ENCODE measurements at regions of chr9 and their contacts with region 1.

Region 1: DNA sequence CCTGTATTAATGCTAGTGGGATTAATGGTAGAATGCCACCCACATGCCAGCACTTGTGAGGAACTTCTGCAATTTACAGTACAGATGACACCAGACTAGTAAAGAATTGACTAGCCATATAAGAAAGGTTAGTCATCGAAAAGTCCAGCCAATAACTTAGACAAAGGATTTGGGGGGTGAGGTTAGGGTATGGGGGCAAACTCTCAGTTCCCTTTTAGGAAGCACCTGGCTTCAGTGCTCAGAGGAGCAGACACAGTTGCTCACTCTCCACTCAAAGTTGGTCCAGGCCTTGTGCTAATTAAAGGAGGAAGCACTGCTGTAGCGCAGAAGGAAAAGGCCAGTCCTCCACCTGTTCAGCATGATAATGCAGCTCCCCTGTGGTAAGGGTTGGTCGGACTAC is 25.2 kb downstream of the TGFBR1 start:
- DNase-seq: no peak
- ATAC-seq: no peak

Region 2: GRCh38 chr9:98848450-98849149 is 281.5 kb before region 1 on chr9:
- intact Hi-C with region 1: loop called (anchors 5 kb)
- DNase-seq: peak; percentile 96
- ATAC-seq: peak; percentile 99

Region 3: GRCh38 chr9:99019790-99020331 is 110.2 kb before region 1 on chr9:
- intact Hi-C with region 1: loop called (anchors 10 kb)
- DNase-seq: no peak
- ATAC-seq: peak; percentile 58